ENCODE measurements at regions of chr2 and their contacts with region 1.

Region 1: DNA sequence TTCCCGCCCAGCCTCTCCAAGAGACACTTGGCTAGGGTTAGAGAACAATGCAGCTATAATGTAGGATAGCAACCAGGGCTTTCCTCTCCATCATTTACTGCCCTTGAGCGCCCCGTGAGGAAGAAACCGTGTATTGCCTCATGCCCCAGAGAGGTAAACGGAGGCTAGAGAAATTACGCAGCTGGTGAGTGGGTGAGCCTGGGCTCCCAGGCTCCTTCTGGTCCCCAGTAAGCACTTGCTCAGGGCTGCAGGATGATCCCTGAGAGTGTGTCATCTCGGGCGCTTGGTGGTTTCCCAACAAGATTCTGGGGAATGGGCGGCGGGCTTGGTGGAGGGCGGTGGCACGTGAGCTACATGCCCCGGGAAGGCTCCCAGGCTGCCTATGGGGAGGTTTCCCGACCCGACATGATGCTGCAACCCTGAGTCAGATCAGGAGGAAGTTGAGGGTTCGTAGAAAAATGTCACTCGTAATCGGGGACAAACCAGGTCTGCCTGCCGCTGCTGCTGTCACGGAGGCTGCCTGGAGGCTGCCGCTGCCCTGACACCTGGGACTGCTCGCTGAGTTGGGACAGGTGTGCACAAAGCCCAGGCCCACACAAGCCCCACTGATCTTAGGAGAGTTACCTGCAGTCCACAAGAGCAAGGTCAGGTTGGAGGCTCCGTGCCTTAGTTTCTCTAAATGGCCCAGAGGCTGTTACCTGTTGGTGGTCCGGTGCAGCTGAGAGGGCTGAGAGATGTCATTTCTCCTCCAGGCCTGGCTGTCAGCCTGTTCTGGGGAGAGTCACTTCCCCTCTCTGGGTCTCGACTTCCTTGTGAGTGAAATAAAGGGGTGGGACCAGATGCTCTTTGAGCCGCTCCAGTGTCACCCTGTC is at the start of gene GPR55:
- DNase-seq: peak in 1 of 2 experiments; percentile 83
- H3K4me3 ChIP-seq: no peak within 1 kb of the TSS
- H3K27ac ChIP-seq: no peak within 1 kb of the TSS
- H3K4me1 ChIP-seq: peaks cover 0 to 3% (median 2%) of the 10 kb centered on the region in 4 experiments; a peak in 2 of 7 replicates
- H3K27me3 ChIP-seq: no peaks in the 10 kb centered on the region
- CTCF ChIP-seq: peak; percentile 61 to 78 (median 73)
- EP300 ChIP-seq: no peak
- POLR2A ChIP-seq: no peak
- RAD21 ChIP-seq: peak; percentile 66 to 76
- total RNA-seq, gene GPR55: not detected in 2 replicates

Region 2: DNA sequence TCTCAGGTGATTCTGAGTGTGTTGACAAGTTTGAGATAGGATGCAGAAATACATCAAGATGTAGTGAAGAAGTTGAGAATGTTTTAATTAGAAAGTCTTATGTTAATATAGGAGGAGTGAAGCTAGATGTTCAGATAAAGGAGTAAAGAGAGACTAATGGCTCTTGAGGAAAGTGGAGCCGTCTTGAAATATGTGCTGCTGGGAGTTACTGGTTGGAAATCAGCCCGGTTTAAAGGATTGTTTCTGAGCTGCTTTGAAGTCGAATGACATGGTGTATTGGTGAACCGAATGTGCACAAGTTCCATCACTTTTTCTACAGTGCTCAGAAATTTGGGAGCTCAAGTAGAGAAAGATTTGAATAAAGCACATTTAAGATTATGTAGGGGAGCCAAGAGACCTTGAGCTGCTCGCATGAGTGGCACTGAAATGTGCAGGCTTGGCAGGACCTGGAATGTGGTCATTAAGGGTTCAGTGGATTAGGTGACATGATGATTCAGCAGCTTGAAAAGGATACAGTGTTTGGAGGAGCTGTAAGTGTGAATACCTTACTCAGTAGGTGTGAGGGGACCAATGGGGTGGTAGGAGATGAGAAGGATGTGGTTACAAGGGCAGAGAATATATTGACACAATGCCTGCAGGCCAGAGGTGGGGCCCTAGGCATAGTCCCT is 143.4 kb before region 1 on chr2:
- CTCF ChIA-PET with region 1: no interaction called
- POLR2A ChIA-PET with region 1: no interaction called
- DNase-seq: no peak
- H3K4me3 ChIP-seq: no peak overlapping the region
- H3K27ac ChIP-seq: no peak overlapping the region
- H3K4me1 ChIP-seq: peaks cover 0 to 4% (median under 1%) of the 10 kb centered on the region in 4 experiments; a peak in 4 of 7 replicates
- H3K27me3 ChIP-seq: no peaks in the 10 kb centered on the region
- CTCF ChIP-seq: no peak
- EP300 ChIP-seq: no peak
- POLR2A ChIP-seq: no peak
- RAD21 ChIP-seq: no peak

Region 3: GRCh38 chr2:230824406-230824978 is 100.2 kb before region 1 on chr2:
- CTCF ChIA-PET with region 1: interaction called, 18 read pairs
- POLR2A ChIA-PET with region 1: no interaction called
- DNase-seq: peak; percentile 60 to 66
- H3K4me3 ChIP-seq: no peak overlapping the region
- H3K27ac ChIP-seq: no peak overlapping the region
- H3K4me1 ChIP-seq: peaks cover 0 to 6% (median 2%) of the 10 kb centered on the region in 4 experiments; a peak in 4 of 7 replicates
- H3K27me3 ChIP-seq: no peaks in the 10 kb centered on the region; a peak in 2 of 7 replicates
- CTCF ChIP-seq: peak; percentile 8 to 90 (median 72)
- EP300 ChIP-seq: no peak
- POLR2A ChIP-seq: no peak
- RAD21 ChIP-seq: peak; percentile 92

Region 4: DNA sequence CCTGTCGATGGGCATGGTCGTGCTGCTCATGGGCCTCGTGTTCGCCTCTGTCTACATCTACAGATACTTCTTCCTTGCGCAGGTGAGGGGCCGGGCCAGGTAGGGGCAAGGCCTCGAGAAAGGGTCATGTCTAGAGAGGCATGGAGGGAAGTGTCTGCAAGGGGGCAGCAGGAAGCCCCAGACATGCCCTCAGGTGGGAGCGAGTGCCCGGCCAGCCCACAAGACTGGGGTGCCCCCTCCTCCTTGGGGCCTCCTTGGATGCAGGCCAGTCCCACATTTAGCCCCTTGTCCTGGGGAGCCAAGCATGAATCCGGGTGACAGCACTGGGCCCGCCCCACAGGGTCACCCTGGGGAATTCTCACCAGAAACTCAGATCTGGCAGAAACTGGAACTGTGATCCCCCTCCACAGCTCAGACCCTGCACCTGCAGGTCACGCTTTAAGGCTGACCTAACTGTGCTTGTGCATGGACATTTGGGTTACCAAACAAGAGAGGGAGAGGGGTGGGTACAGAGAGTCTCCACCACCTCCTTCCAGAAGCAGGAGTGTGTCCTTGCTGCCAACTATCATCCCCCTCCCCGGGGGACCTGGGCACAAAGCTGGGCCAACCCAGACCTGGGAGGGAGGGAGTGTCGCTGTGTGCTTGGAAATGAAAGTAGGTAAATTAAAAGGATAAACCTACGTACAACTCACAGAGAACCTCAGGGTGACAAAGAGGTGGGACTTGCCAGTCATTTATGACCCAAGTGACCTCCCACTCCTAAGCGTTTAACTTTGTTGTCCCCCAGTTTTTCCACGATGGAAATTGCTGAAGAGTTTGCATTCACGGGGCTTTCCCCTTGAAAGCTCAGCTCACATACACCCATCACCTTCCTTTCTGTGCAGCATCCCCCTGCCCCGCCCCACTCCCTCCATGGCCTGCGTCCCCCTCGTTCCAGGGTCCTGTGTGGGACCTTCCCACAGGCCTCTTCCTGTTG is 50.9 kb before region 1 on chr2:
- CTCF ChIA-PET with region 1: interaction called, 13 read pairs
- POLR2A ChIA-PET with region 1: interaction called, 7 read pairs
- DNase-seq: peak in 1 of 2 experiments; percentile 41
- H3K4me3 ChIP-seq: no peak overlapping the region
- H3K27ac ChIP-seq: no peak overlapping the region; the same call in 1 of the 2 replicates
- H3K4me1 ChIP-seq: peaks cover 17 to 33% (median 30%) of the 10 kb centered on the region in 4 experiments
- H3K27me3 ChIP-seq: no peaks in the 10 kb centered on the region
- CTCF ChIP-seq: no peak
- EP300 ChIP-seq: no peak
- POLR2A ChIP-seq: no peak
- RAD21 ChIP-seq: no peak

Region 5: GRCh38 chr2:230902180-230902899 is 22.4 kb before region 1 on chr2:
- CTCF ChIA-PET with region 1: interaction called, 332 read pairs
- POLR2A ChIA-PET with region 1: interaction called, 3 read pairs
- DNase-seq: peak; percentile 51 to 78
- H3K4me3 ChIP-seq: peak overlapping the region in 2 of 4 experiments; percentile 42 to 46; a peak in 3 of 8 replicates
- H3K27ac ChIP-seq: peak overlapping the region; percentile 75
- H3K4me1 ChIP-seq: peaks cover 7 to 32% (median 18%) of the 10 kb centered on the region in 4 experiments
- H3K27me3 ChIP-seq: peaks cover 0 to 13% (median 0%) of the 10 kb centered on the region in 4 experiments; a peak in 3 of 7 replicates
- CTCF ChIP-seq: peak; percentile 90 to 97 (median 91)
- EP300 ChIP-seq: peak in 1 of 2 experiments; percentile 67; a peak in 1 of 3 replicates
- POLR2A ChIP-seq: peak in 1 of 2 experiments; percentile 31; a peak in 1 of 3 replicates
- RAD21 ChIP-seq: peak; percentile 91 to 94

Region 6: DNA sequence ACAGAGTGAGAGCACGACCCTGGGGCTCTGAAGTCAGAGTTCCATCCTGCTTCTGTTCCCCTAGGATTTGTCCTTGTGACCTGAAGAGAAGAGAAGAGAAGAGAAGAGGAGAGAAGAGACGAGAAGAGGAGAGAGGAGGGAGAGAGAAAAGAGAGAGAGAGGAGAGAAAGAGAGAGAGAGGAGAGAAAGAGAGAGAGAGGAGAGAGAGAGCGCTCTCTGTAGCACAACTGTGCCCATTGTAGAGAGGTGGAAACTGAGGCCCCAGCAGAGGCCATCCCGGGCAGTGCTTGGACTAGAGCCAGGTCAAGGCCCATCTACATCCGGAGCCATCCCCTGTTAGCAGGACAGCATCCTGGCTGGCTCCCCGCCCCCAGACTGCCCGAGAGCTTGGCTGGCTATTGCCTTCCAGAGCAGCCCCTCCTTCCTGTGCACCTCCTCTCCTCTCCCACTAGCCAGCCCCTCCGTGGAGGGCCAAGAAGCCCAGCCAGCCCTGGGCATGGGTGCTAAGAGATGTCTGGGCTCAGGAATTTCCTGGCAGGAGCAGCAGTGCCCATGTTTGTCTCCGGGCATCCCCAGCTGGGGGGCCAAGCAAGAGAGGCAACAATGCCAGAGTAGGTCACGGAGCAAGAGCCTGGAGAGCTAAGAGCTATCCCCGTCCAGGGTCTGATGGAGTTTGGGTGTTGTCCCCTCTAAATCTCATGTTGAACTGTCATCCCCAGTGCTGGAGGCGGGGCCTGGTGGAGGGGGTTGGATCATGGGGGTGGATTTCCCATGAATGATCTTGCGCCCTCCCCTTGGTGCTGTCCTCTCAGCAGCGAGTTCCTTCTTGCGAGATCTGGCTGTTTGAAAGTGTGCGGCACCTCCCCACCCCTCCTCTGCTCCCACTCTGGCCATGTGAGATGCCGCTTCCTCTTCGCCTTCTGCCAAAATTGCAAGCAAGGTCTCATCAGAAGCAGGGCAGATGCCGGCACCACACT is 18.5 kb after region 1 on chr2:
- CTCF ChIA-PET with region 1: interaction called, 49 read pairs
- POLR2A ChIA-PET with region 1: interaction called, 4 read pairs
- DNase-seq: peak in 1 of 2 experiments; percentile 43
- H3K4me3 ChIP-seq: no peak overlapping the region
- H3K27ac ChIP-seq: no peak overlapping the region
- H3K4me1 ChIP-seq: no peaks in the 10 kb centered on the region; a peak in 1 of 7 replicates
- H3K27me3 ChIP-seq: no peaks in the 10 kb centered on the region
- CTCF ChIP-seq: no peak
- EP300 ChIP-seq: no peak
- POLR2A ChIP-seq: no peak
- RAD21 ChIP-seq: no peak

Region 7: GRCh38 chr2:230981704-230982103 is 57.0 kb after region 1 on chr2:
- CTCF ChIA-PET with region 1: interaction called, 97 read pairs
- POLR2A ChIA-PET with region 1: interaction called, 4 read pairs
- DNase-seq: no peak
- H3K4me3 ChIP-seq: no peak overlapping the region
- H3K27ac ChIP-seq: no peak overlapping the region
- H3K4me1 ChIP-seq: peaks cover 0 to 7% (median 3%) of the 10 kb centered on the region in 4 experiments; a peak in 5 of 7 replicates
- H3K27me3 ChIP-seq: peaks cover 0 to under 1% (median under 1%) of the 10 kb centered on the region in 4 experiments; a peak in 3 of 7 replicates
- CTCF ChIP-seq: no peak
- EP300 ChIP-seq: no peak
- POLR2A ChIP-seq: no peak
- RAD21 ChIP-seq: no peak

Region 8: DNA sequence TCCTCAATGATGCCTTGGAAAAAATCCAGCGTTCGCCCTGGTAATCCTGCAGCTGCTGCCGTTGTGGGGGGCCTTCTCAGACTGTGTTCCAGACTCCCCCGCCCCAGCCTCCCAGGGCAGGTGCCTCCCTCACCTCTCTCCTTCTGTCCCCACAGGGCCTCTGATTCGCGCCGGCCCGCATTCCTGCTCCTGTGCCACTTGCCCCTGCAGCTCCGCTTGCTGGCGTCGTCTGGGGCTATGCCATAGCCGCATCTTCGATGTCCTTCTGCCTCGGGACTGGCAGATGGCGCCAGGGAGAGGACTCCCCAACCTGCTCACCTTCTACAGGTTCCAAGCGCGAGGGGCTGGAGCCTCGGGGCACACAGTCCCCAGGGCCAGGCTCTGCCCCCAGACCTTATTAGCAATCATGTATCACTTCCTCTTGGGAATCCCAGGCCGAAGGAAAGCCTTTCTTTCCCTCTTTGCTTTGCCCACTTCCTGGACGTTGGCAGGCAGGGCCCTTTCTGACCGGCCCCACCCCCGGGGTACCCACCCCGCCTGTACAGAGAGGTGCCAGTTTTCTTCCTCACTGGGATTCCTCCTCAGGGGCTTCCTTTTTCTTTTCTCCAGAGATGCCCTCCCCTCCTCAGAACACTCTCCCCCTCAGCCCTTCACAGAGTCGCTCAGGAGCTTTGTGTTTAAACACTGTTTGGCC is 75.7 kb after region 1 on chr2:
- CTCF ChIA-PET with region 1: interaction called, 12 read pairs
- POLR2A ChIA-PET with region 1: no interaction called
- DNase-seq: peak; percentile 60 to 70
- H3K4me3 ChIP-seq: no peak overlapping the region
- H3K27ac ChIP-seq: no peak overlapping the region
- H3K4me1 ChIP-seq: no peaks in the 10 kb centered on the region; a peak in 2 of 7 replicates
- H3K27me3 ChIP-seq: peaks cover 0 to 6% (median 3%) of the 10 kb centered on the region in 4 experiments; a peak in 3 of 7 replicates
- CTCF ChIP-seq: peak; percentile 67 to 80 (median 69)
- EP300 ChIP-seq: no peak
- POLR2A ChIP-seq: no peak
- RAD21 ChIP-seq: peak; percentile 61 to 73; a peak in 3 of 4 replicates

Region 9: DNA sequence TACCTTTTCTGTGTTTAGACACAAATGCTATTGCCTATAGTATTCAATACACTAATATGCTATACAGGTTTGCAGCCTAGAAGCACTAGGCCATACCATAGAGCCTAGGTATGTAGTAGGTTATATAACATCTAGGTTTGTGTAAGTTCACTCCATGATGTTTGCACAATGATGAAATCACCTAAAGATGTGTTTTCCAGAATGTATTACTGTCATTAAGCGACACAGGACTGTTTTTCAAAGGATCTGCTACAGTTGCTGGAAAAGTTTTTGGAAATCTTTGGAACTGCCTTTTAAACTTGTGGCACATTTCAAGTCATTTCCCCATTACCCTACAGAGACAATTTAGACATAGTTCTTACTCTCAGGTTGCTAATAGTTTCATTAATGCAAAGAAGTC is 141.3 kb after region 1 on chr2:
- CTCF ChIA-PET with region 1: no interaction called
- POLR2A ChIA-PET with region 1: no interaction called
- DNase-seq: no peak
- H3K4me3 ChIP-seq: no peak overlapping the region
- H3K27ac ChIP-seq: no peak overlapping the region
- H3K4me1 ChIP-seq: no peaks in the 10 kb centered on the region
- H3K27me3 ChIP-seq: no peaks in the 10 kb centered on the region
- CTCF ChIP-seq: no peak
- EP300 ChIP-seq: no peak
- POLR2A ChIP-seq: no peak
- RAD21 ChIP-seq: no peak

Measured in H1 (cell line).